ENCODE measurements at regions of chr13 and their contacts with region 1.

Region 1: DNA sequence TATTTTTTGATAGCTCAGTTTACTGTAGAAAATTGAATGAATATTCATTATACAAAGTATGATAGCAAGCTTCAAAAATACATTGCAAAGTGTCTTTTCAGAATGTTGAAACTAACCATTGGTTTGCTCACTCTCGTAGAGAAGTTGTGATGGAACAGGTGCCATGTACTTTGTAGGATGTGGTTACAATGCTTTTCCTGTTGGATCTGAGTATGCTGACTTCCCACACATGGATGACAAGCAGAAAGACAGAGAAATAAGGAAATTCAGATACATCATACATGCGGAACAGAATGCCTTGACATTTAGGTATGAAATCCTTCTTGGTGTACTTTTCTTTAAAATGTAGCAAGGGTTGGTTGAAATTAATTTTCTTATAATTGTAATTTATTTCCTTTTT is 30.5 kb downstream of the CDADC1 start:
- DNase-seq: no peak
- ATAC-seq: no peak
- H3K4me3 ChIP-seq: no peak overlapping the region
- H3K4me3 Mint-ChIP-seq: no peak overlapping the region
- H3K27ac ChIP-seq: no peak overlapping the region
- H3K27ac Mint-ChIP-seq: no peak overlapping the region
- H3K4me1 ChIP-seq: no peaks in the 10 kb centered on the region
- H3K4me1 Mint-ChIP-seq: no peaks in the 10 kb centered on the region
- H3K27me3 ChIP-seq: no peaks in the 10 kb centered on the region
- H3K27me3 Mint-ChIP-seq: no peaks in the 10 kb centered on the region
- CTCF ChIP-seq: no peak

Region 2: GRCh38 chr13:47539317-47539716 is 1738.9 kb before region 1 on chr13:
- CTCF ChIA-PET with region 1: no interaction called
- POLR2A ChIA-PET with region 1: no interaction called
- intact Hi-C with region 1: no loop called
- DNase-seq: no peak
- ATAC-seq: no peak
- H3K4me3 ChIP-seq: no peak overlapping the region
- H3K4me3 Mint-ChIP-seq: no peak overlapping the region
- H3K27ac ChIP-seq: no peak overlapping the region
- H3K27ac Mint-ChIP-seq: no peak overlapping the region
- H3K4me1 ChIP-seq: no peaks in the 10 kb centered on the region
- H3K4me1 Mint-ChIP-seq: no peaks in the 10 kb centered on the region
- H3K27me3 ChIP-seq: no peaks in the 10 kb centered on the region
- H3K27me3 Mint-ChIP-seq: no peaks in the 10 kb centered on the region
- CTCF ChIP-seq: no peak

Region 3: DNA sequence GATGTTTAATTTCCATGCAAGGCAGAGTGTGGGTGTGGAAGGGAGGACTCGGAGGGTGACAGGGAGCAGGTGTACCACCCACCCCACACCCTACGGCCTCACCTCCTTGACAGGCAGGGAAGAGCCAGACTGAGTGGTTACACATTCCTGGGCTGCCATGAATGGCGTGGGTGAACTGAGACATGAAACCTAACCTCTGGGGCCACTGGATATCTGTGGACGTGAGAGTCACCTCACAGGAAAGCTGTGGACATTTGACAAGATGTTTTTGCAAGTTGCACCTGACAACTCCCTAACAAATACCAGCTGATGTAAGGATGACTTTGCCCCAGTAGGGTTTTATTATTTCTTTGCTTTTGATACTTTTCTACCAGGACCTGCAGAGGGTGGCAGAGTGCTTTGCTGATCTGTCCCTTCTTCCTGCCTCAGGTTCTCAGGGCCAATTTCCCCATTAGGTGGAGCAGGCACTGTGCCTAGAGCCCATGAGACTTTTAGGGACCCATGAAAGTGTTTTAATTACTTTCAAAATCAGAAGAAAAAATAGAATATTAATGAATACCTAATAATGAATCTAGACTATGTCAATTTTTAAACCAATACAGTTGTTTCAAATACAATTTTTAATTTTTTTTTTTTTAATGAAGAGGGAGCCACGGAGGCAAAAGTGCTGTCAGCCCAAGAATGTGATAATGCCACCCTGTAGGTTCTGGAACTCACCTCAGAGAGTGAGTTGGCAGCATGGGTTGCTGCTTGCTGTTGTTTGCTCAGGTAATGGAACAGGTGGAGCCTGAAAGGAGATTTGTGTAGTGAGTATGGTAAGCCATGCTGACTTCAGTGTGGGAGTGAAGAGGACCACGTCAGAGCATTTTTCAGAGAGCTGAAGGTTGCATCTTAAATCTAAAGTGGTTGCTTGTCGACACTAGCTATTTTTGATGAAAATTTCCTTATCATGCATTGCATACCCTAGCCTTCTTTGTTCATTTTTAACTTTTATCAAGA is 682.5 kb before region 1 on chr13:
- CTCF ChIA-PET with region 1: no interaction called
- POLR2A ChIA-PET with region 1: no interaction called
- intact Hi-C with region 1: loop called in 1 of 2 experiments (anchors 5 kb)
- DNase-seq: peak; percentile 38 to 87 (median 50)
- ATAC-seq: peak; percentile 95
- H3K4me3 ChIP-seq: no peak overlapping the region
- H3K4me3 Mint-ChIP-seq: no peak overlapping the region
- H3K27ac ChIP-seq: no peak overlapping the region
- H3K27ac Mint-ChIP-seq: no peak overlapping the region
- H3K4me1 ChIP-seq: no peaks in the 10 kb centered on the region
- H3K4me1 Mint-ChIP-seq: no peaks in the 10 kb centered on the region
- H3K27me3 ChIP-seq: no peaks in the 10 kb centered on the region
- H3K27me3 Mint-ChIP-seq: no peaks in the 10 kb centered on the region
- CTCF ChIP-seq: peak; percentile 68

Region 4: GRCh38 chr13:49098771-49099512 is 179.3 kb before region 1 on chr13:
- CTCF ChIA-PET with region 1: no interaction called
- POLR2A ChIA-PET with region 1: no interaction called
- intact Hi-C with region 1: loop called (anchors 5 to 10 kb)
- DNase-seq: peak in 3 of 14 experiments; percentile 16 to 33 (median 26)
- ATAC-seq: no peak
- H3K4me3 ChIP-seq: no peak overlapping the region
- H3K4me3 Mint-ChIP-seq: no peak overlapping the region
- H3K27ac ChIP-seq: no peak overlapping the region
- H3K27ac Mint-ChIP-seq: no peak overlapping the region
- H3K4me1 ChIP-seq: no peaks in the 10 kb centered on the region
- H3K4me1 Mint-ChIP-seq: peaks cover 36% of the 10 kb centered on the region
- H3K27me3 ChIP-seq: no peaks in the 10 kb centered on the region
- H3K27me3 Mint-ChIP-seq: no peaks in the 10 kb centered on the region
- CTCF ChIP-seq: no peak

Region 5: DNA sequence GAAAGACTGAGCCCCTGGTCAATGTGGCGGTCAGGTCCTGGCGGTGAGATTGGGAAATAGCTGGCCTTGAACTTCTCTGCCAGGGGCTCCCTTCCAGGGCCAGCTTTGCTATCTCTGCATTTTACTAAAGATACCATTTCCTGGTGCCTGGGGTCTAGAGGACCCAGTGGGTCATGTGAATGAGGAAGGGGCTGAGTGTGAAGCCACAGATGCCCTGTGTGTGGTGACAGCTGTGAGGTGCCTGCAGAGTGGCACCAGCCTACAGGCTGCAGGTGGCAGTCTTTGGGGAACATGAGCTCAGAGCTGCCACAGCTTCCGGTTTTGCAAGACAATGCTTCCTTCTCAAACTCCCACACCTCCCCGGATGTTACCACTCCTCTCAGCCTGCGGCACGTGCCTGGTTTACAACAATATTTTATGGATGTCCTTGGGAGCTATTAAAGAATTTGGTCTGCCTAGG is 63.3 kb before region 1 on chr13:
- CTCF ChIA-PET with region 1: no interaction called
- POLR2A ChIA-PET with region 1: no interaction called
- intact Hi-C with region 1: loop called in 1 of 2 experiments (anchors 2 kb)
- DNase-seq: peak in 12 of 14 experiments; percentile 16 to 74 (median 36)
- ATAC-seq: peak; percentile 89
- H3K4me3 ChIP-seq: no peak overlapping the region
- H3K4me3 Mint-ChIP-seq: no peak overlapping the region
- H3K27ac ChIP-seq: no peak overlapping the region
- H3K27ac Mint-ChIP-seq: no peak overlapping the region
- H3K4me1 ChIP-seq: peaks cover 15% of the 10 kb centered on the region
- H3K4me1 Mint-ChIP-seq: peaks cover 15% of the 10 kb centered on the region
- H3K27me3 ChIP-seq: peaks cover 22 to 24% of the 10 kb centered on the region in 2 experiments
- H3K27me3 Mint-ChIP-seq: peaks cover 43% of the 10 kb centered on the region
- CTCF ChIP-seq: peak; percentile 23

Region 6: DNA sequence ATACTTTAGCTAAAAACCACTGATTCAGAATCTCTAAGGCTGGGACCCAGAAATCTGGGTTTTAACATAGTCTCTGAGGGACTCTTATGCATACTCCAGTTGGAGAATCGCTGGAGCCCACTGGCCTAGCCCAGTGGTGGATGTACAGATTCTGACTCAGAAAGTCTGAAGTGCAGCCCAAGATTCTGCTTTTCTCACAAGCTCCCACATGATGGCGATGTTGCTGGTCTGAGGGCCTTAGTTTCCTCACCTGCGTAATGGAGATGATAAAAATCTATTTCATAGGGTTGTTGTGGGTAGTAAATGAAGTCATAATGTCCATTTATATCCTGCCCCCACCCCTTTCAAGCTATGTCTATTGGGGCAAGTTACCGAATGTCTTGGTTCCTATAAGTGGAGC is 38.2 kb before region 1 on chr13:
- CTCF ChIA-PET with region 1: interaction called, 20 read pairs
- POLR2A ChIA-PET with region 1: no interaction called
- intact Hi-C with region 1: loop called (anchors 1 to 2 kb)
- DNase-seq: peak in 8 of 14 experiments; percentile 21 to 74 (median 46)
- ATAC-seq: peak; percentile 70
- H3K4me3 ChIP-seq: no peak overlapping the region
- H3K4me3 Mint-ChIP-seq: no peak overlapping the region
- H3K27ac ChIP-seq: no peak overlapping the region
- H3K27ac Mint-ChIP-seq: no peak overlapping the region
- H3K4me1 ChIP-seq: no peaks in the 10 kb centered on the region
- H3K4me1 Mint-ChIP-seq: no peaks in the 10 kb centered on the region
- H3K27me3 ChIP-seq: peaks cover 0 to 7% of the 10 kb centered on the region in 2 experiments
- H3K27me3 Mint-ChIP-seq: peaks cover 12% of the 10 kb centered on the region
- CTCF ChIP-seq: peak; percentile 46

Region 7: DNA sequence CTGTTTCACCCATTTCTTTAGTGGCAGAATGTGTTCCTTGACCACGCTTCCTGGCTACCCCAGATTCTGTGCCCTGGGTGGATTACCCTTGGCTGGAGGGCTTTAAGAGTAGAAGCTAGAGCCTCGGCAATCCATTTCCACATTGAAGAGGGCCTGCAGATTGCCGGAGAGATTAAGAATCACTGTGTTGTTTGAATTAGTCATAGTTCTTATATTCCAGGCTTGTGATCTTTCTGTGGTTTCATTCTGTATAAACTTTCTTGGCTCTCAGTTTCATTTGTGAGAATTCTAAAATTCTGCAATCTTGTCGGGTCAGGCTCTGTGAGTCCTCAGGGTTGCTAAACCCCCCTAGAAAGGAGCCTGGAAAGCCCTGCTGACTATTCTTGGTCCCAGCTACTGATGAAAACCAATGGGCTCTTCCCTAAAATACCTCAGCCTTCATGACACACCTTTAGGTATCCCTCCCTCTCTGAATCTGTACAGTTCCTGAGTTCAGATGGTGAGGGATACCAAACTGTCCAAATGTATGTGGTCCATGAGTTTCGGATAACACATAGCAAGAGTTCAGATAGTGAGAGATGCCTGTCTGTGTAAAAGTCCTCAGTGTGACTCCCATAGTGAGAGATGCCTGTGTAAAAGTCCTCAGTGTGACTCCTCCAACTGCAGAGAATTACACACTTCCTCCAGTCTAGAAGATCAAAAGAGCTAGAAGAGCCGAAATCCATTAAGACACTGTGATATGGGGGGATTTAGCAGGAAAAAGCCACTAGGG is 221.9 kb after region 1 on chr13:
- CTCF ChIA-PET with region 1: no interaction called
- POLR2A ChIA-PET with region 1: no interaction called
- intact Hi-C with region 1: no loop called
- DNase-seq: peak in 4 of 14 experiments; percentile 10 to 24 (median 18)
- ATAC-seq: no peak
- H3K4me3 ChIP-seq: no peak overlapping the region
- H3K4me3 Mint-ChIP-seq: peak overlapping the region; percentile 36
- H3K27ac ChIP-seq: peak overlapping the region in 1 of 2 donors; percentile 0
- H3K27ac Mint-ChIP-seq: peak overlapping the region; percentile 95
- H3K4me1 ChIP-seq: peaks cover 46% of the 10 kb centered on the region
- H3K4me1 Mint-ChIP-seq: peaks cover 64% of the 10 kb centered on the region
- H3K27me3 ChIP-seq: no peaks in the 10 kb centered on the region
- H3K27me3 Mint-ChIP-seq: no peaks in the 10 kb centered on the region
- CTCF ChIP-seq: no peak

Measured in CD4-positive, alpha-beta T cell (primary cell).